Aorta (tissue), 5 donors: ENCODE measurements at regions of chr1 and their contacts with region 1.

Region 1: GRCh38 chr1:153749408-153750005 is 21.7 kb downstream of the INTS3 start:
- DNase-seq: peak; percentile 91 to 92
- ATAC-seq: peak; percentile 95
- H3K4me3 ChIP-seq: no peak overlapping the region
- H3K27ac ChIP-seq: peak overlapping the region; percentile 86 to 95
- H3K4me1 ChIP-seq: peaks cover 6 to 16% of the 10 kb centered on the region in 2 donors
- H3K27me3 ChIP-seq: no peaks in the 10 kb centered on the region

Region 2: DNA sequence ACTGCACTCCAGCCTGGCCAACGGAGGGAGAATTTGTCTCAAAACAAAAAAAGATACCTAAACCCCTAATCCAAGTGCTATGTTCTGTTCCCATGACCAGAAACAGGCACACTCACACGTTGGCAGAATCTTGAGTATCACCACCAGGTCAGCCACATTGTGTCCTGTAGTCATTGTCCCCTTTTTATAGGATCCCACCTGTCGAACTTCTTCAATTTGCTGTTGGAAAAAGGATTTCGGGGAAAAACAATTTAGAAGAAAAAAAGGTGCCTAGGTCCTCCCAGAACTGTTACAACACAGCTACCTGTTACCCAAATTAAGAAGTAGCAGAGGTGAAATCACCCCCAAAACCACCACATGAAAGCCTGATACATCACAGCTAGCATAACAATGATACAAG is 82.1 kb before region 1 on chr1:
- intact Hi-C with region 1: no loop called
- DNase-seq: no peak
- ATAC-seq: no peak
- H3K4me3 ChIP-seq: no peak overlapping the region
- H3K27ac ChIP-seq: no peak overlapping the region
- H3K4me1 ChIP-seq: no peaks in the 10 kb centered on the region
- H3K27me3 ChIP-seq: no peaks in the 10 kb centered on the region

Region 3: GRCh38 chr1:153677718-153678505 is 71.6 kb before region 1 on chr1:
- intact Hi-C with region 1: loop called (anchors 1 to 5 kb)
- DNase-seq: peak; percentile 66 to 79
- ATAC-seq: peak; percentile 81
- H3K4me3 ChIP-seq: peak overlapping the region; percentile 30 to 79
- H3K27ac ChIP-seq: peak overlapping the region in 1 of 2 donors; percentile 63
- H3K4me1 ChIP-seq: no peaks in the 10 kb centered on the region
- H3K27me3 ChIP-seq: no peaks in the 10 kb centered on the region

Region 4: GRCh38 chr1:153688276-153688675 is 61.2 kb before region 1 on chr1:
- intact Hi-C with region 1: no loop called
- DNase-seq: no peak
- ATAC-seq: no peak
- H3K4me3 ChIP-seq: no peak overlapping the region
- H3K27ac ChIP-seq: no peak overlapping the region
- H3K4me1 ChIP-seq: no peaks in the 10 kb centered on the region
- H3K27me3 ChIP-seq: no peaks in the 10 kb centered on the region

Region 5: DNA sequence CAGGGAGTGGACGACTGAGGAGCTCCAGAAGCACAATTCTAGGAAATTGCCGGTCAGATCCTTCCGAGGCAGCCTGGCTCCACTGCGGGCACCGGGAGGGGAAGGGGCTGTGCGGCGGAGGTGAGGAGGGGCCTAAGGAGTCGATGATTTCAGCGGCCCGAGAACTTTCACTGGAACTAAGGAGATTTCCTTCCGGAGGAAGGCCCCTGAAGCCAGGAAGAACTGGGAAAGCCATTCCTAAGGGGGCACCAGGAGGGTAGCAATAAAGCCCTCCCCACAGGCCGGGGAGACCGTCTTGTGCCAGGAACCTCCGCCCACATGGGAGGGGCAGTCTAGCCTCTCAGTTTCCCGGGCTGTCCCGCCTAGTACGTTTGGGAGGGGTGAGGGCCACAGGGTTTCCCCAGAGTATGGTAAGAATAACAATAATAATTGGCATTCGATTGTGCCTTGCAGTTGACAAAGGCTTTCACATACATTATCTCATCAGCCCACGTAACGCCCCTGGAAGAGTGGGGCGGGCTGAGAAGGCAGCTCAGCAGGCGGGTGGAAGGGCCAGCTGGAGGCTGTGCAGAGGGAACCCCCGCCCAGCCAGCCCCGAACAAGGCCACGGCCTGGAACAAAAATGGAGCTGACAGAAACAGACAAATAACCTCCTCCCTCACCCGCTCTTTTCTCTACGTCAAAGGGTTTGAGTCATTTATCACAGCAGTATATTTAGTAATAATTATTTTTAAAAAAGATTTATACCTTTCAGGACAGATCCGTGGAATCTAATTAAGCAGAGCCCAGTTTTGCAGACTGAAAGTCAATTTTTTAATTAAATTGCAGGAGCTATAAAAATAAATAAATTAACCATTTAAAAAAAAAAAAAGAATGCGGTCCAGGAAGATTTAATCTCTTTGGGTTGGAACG is 51.2 kb before region 1 on chr1:
- intact Hi-C with region 1: loop called (anchors 5 kb)
- DNase-seq: peak; percentile 92 to 94
- ATAC-seq: peak; percentile 91
- H3K4me3 ChIP-seq: no peak overlapping the region
- H3K27ac ChIP-seq: peak overlapping the region; percentile 96 to 97
- H3K4me1 ChIP-seq: peaks cover 0 to 3% of the 10 kb centered on the region in 2 donors
- H3K27me3 ChIP-seq: no peaks in the 10 kb centered on the region

Region 6: GRCh38 chr1:153727463-153728304 is 21.8 kb before region 1 on chr1 and contains the start of gene INTS3:
- intact Hi-C with region 1: loop called in 1 of 2 experiments (anchors 2 kb)
- DNase-seq: peak; percentile 100
- ATAC-seq: peak; percentile 100
- H3K4me3 ChIP-seq: peak within 1 kb of the TSS; percentile 82 to 89
- H3K27ac ChIP-seq: peak within 1 kb of the TSS; percentile 84 to 99
- H3K4me1 ChIP-seq: no peaks in the 10 kb centered on the region
- H3K27me3 ChIP-seq: no peaks in the 10 kb centered on the region
- total RNA-seq, gene INTS3: 52.2 to 76.7 TPM

Region 7: DNA sequence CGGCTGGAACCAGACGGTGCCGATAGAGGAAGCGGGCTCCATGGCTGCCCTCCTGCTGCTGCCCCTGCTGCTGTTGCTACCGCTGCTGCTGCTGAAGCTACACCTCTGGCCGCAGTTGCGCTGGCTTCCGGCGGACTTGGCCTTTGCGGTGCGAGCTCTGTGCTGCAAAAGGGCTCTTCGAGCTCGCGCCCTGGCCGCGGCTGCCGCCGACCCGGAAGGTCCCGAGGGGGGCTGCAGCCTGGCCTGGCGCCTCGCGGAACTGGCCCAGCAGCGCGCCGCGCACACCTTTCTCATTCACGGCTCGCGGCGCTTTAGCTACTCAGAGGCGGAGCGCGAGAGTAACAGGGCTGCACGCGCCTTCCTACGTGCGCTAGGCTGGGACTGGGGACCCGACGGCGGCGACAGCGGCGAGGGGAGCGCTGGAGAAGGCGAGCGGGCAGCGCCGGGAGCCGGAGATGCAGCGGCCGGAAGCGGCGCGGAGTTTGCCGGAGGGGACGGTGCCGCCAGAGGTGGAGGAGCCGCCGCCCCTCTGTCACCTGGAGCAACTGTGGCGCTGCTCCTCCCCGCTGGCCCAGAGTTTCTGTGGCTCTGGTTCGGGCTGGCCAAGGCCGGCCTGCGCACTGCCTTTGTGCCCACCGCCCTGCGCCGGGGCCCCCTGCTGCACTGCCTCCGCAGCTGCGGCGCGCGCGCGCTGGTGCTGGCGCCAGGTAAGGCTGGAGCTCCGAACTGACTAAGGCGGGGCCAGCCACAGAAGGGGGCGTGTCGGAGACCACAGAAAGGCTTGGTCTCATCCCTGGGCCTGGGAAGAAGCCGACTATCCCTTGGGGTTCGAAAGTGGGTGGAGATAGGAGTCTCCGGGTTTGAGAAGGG is 26.2 kb after region 1 on chr1:
- intact Hi-C with region 1: loop called in 1 of 2 experiments (anchors 2 kb)
- DNase-seq: peak; percentile 82 to 90
- ATAC-seq: peak; percentile 53
- H3K4me3 ChIP-seq: peak overlapping the region; percentile 47 to 50
- H3K27ac ChIP-seq: peak overlapping the region; percentile 54 to 82
- H3K4me1 ChIP-seq: no peaks in the 10 kb centered on the region
- H3K27me3 ChIP-seq: no peaks in the 10 kb centered on the region

Region 8: DNA sequence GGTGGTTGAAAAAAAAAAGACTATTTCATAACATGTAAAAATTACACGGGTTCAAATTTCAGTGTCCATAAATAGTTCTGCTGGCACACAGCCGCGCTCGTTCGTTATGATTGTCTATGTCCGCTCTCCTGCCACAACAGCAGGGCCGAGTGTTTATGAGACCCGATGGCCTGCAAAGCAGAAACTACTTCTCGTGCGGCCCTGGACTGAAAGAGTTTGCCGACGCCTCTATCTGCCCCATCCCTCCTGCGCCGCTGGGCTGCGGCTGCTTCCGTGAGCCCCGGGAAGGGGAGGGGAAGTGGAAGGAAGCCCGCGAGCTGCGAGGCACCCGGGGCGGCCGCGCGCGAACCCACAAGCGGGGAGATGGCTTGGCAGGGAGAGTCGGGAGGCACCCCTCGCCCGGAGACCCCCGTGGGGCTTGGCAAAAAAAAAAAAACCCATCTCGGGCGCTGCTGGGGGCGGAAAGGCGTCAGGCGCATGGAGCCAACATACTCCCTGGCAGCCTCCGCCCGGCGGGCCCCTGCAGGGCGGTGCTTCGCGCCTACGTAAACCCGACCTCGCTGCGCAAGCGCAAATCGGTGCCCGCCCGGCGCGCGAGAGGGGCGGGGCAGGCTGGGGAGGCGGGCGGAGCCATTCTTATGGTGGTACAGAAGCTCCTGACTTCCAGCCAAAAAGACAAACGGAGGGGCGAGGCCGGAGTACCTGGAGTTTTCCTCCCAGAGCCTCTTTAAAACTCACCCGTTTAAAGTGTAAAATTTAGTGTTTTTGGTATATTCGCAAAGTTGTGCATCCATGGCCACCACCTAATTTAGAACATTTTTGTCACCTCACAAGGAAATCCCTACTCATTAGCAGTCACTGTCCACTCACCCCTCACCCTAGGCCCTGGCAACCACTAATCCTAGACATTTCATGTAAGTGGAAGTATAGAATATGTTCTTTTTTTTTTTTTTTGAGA is 34.0 kb after region 1 on chr1:
- intact Hi-C with region 1: loop called in 1 of 2 experiments (anchors 5 kb)
- DNase-seq: peak; percentile 95 to 97
- ATAC-seq: peak; percentile 98
- H3K4me3 ChIP-seq: peak overlapping the region; percentile 14 to 61
- H3K27ac ChIP-seq: peak overlapping the region; percentile 67 to 72
- H3K4me1 ChIP-seq: no peaks in the 10 kb centered on the region
- H3K27me3 ChIP-seq: no peaks in the 10 kb centered on the region